Activated T-helper 1 cell treated with anti-CD3 and anti-CD28 coated beads, Interleukin-12 subunit alpha, Interleukin-12 subunit beta, Interleukin-2, Interleukin-4 antibody, amounts not matched to agents 30 ng/mL and 10 ng/mL and 1 ng/mL, durations not matched to agents 14 hours and 24 hours and 36 hours (primary cell): ENCODE measurements at regions of chr4 and their contacts with region 1.

Region 1: DNA sequence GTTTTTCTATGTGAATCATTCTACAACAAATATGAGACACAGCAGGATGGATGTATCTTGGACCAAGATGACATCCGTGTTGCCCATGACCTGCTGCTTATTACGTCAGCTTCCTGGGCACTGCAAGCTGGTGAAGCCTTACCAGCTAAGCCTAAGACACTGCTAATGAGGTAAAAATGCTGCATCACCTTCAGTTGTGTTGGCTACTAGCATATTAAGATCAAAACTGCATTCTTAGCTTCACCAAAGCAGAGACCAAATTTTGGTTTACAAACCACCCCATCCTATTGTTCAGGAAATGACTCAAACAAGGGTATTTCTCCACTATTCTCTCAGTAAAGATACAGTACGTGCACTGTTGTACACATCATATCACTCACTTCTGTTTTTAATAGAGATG is 50.3 kb downstream of the MAML3 start:
- DNase-seq: peak; percentile 54
- H3K4me3 Mint-ChIP-seq: peak overlapping the region; percentile 39
- H3K27ac Mint-ChIP-seq: peak overlapping the region; percentile 75
- H3K4me1 Mint-ChIP-seq: peaks cover 72% of the 10 kb centered on the region
- H3K27me3 Mint-ChIP-seq: peaks cover 19% of the 10 kb centered on the region

Region 2: DNA sequence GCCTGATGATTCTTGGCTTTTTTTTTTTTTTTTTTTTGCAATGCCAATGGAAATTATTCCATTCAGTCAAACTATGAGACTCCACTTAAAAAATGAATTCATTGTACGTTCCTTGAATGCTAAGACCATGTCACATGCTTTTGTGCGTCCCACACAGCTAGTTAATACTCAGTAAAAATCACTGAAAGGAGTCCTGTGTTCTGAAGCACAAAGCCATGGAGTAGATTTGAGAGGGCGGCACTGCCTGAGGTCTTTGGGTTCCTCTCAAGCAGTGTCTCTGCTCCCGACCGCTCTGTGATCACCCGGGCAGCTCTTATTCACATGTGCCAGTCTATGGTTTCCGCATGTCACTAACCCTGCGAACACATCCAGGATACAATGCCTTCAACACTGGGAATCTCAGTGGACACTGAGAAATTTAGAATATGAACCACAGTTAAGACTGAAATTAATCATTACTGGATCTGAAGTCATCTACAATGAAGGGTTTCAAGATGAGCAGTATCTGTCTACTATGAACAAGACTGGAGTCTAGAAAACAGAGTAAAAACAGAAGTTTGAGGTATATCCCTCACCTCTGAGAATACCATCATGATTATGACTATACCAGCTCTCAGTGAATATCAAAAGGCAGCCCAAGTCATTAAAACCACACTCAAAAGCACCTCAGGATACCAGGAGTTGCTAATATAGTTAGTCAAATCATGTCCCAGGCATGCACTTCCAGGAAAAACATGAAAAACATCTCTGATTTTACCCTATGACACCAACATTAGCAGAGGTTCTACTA is 245.0 kb before region 1 on chr4:
- intact Hi-C with region 1: loop called (anchors 1 kb)
- DNase-seq: no peak
- H3K4me3 Mint-ChIP-seq: no peak overlapping the region
- H3K27ac Mint-ChIP-seq: no peak overlapping the region
- H3K4me1 Mint-ChIP-seq: peaks cover 33% of the 10 kb centered on the region
- H3K27me3 Mint-ChIP-seq: peaks cover 18% of the 10 kb centered on the region

Region 3: GRCh38 chr4:140049024-140049848 is 54.4 kb before region 1 on chr4:
- intact Hi-C with region 1: loop called (anchors 2 kb)
- DNase-seq: peak; percentile 11
- H3K4me3 Mint-ChIP-seq: peak overlapping the region; percentile 77
- H3K27ac Mint-ChIP-seq: no peak overlapping the region
- H3K4me1 Mint-ChIP-seq: peaks cover 32% of the 10 kb centered on the region
- H3K27me3 Mint-ChIP-seq: peaks cover 59% of the 10 kb centered on the region

Region 4: GRCh38 chr4:140071806-140072205 is 31.9 kb before region 1 on chr4:
- intact Hi-C with region 1: loop called (anchors 1 kb)
- DNase-seq: peak; percentile 62
- H3K4me3 Mint-ChIP-seq: peak overlapping the region; percentile 71
- H3K27ac Mint-ChIP-seq: peak overlapping the region; percentile 70
- H3K4me1 Mint-ChIP-seq: peaks cover 59% of the 10 kb centered on the region
- H3K27me3 Mint-ChIP-seq: peaks cover 48% of the 10 kb centered on the region

Region 5: DNA sequence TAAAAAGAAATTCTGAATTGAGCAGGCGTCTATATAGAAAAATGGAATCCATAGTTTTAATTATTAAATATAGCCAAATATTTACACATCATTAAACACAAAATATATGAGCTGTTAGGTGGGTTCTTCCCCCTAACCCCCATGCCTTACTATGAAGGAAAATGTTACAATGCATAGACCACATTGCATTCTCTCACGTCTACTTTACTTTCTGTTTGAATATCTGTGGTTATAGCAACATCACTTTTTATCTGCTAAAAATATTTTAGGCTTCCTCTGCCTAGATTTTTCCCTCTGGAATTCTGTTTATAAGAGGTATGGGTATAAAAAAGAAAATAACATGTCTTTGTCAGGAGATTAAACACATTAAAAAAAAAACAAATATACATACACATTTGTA is 22.8 kb before region 1 on chr4:
- intact Hi-C with region 1: loop called (anchors 1 kb)
- DNase-seq: no peak
- H3K4me3 Mint-ChIP-seq: no peak overlapping the region
- H3K27ac Mint-ChIP-seq: no peak overlapping the region
- H3K4me1 Mint-ChIP-seq: peaks cover 36% of the 10 kb centered on the region
- H3K27me3 Mint-ChIP-seq: peaks cover 57% of the 10 kb centered on the region

Region 6: GRCh38 chr4:140116442-140117104 is 12.9 kb after region 1 on chr4:
- intact Hi-C with region 1: loop called (anchors 1 kb)
- DNase-seq: peak; percentile 25
- H3K4me3 Mint-ChIP-seq: peak overlapping the region; percentile 21
- H3K27ac Mint-ChIP-seq: peak overlapping the region; percentile 3
- H3K4me1 Mint-ChIP-seq: peaks cover 31% of the 10 kb centered on the region
- H3K27me3 Mint-ChIP-seq: peaks cover 26% of the 10 kb centered on the region

Region 7: DNA sequence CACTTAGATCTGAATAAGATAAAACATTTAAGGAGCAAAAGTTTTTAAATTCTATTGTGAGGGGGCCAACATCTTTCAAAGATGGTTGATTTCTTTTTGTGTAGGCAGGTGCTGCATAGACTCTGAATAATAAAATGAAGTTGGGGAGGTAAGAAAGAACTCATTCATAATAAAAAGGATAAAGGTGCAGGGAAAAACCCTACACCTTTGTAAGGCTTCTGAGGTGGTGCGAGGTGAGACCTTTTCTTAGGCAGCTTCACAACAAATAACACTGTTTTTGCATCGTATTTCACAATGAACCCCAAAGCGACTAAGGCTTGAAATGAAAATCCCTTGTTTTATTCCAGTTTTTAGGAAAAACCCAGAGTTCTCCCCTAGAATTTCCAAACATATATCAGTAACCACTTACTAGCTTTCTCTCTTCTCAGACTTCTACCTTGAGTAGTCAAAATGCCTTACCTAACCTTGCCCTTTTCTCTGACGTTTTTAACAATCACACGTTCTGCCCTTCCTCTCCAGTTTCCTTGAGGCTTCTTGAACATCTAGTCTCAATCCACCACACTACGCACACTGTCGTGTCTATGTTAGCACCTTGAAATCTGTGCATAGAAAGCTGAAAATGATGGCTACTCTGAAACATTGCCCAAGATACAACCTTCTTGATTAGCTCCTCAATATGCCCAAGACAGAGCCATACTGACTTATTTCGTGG is 20.1 kb after region 1 on chr4:
- intact Hi-C with region 1: loop called (anchors 1 kb)
- DNase-seq: no peak
- H3K4me3 Mint-ChIP-seq: no peak overlapping the region
- H3K27ac Mint-ChIP-seq: no peak overlapping the region
- H3K4me1 Mint-ChIP-seq: peaks cover 16% of the 10 kb centered on the region
- H3K27me3 Mint-ChIP-seq: peaks cover 29% of the 10 kb centered on the region